ENCODE measurements at regions of chr2 and their contacts with region 1.

Region 1: GRCh38 chr2:160075171-160075570 is 12.8 kb upstream of the PLA2R1 start:
- DNase-seq: peak; percentile 65
- H3K4me3 ChIP-seq: no peak overlapping the region
- CTCF ChIP-seq: no peak

Region 2: DNA sequence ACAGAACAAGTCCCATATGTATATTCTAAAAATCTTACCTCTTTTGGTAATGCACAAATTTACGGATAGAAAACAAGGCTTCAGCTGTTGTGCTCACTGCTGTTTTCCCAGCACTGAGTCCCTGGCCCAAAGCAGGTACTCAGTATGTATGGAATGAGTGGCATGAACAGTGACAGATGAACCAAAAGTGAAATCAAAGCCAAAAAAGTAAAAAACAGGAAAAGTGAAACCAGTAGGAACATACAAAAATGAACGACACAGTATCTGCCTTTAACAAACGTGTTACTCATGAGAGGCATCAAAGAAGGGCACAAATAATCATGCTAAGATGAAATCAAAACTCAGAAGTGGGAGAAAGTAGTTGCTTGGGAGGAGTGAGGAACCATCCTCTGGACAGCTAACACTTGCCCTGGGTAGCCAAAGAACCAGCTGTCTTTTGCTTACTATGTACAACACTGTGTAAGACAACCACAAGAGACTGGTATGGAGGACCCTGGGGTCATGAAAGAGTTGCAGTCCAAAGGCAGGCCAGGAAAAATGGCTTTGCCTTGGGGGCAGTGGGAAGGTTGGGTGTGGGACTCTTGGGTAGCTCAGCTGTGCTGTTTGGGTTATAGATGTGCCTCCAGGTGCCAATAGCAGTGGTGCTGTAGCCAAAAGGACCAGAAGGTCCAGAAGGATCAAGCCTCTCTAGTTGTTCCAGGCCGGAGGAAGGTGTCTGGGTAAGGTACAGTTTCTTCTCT is 27.0 kb after region 1 on chr2:
- CTCF ChIA-PET with region 1: interaction called, 10 read pairs
- POLR2A ChIA-PET with region 1: no interaction called
- DNase-seq: no peak
- H3K4me3 ChIP-seq: no peak overlapping the region
- CTCF ChIP-seq: no peak

Measured in AG04449 (cell line).